ENCODE measurements at regions of chr22 and their contacts with region 1.

Region 1: GRCh38 chr22:43230971-43231723 is 44.2 kb upstream of the TTLL12 start:
- DNase-seq: no peak

Region 2: GRCh38 chr22:43088979-43089717 is 142.0 kb before region 1 on chr22 and contains the start of gene TTLL1:
- intact Hi-C with region 1: no loop called
- DNase-seq: peak; percentile 97
- total RNA-seq, gene TTLL1: 5.0 to 7.2 TPM

Region 3: DNA sequence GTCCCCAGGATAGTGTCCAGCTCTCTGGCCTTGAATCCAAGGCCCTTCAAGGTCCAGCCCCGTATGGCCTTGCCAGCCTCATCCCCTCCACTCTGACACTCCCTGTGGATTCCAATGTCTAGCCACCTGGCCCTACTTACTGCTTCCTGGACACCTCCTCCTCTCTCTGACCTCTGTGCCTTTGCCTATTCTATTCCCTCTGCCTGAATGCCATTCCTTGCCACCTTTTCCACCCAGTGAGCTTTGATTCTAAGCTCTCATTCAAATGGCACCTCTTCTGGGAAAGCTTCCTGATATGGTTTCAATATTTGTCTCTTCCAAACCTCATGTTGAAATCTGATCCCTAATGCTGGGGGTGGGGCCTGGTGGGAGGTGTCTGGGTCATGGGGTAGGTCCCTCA is 12.4 kb before region 1 on chr22:
- intact Hi-C with region 1: loop called in 1 of 2 experiments (anchors 1 kb)
- DNase-seq: no peak

Region 4: DNA sequence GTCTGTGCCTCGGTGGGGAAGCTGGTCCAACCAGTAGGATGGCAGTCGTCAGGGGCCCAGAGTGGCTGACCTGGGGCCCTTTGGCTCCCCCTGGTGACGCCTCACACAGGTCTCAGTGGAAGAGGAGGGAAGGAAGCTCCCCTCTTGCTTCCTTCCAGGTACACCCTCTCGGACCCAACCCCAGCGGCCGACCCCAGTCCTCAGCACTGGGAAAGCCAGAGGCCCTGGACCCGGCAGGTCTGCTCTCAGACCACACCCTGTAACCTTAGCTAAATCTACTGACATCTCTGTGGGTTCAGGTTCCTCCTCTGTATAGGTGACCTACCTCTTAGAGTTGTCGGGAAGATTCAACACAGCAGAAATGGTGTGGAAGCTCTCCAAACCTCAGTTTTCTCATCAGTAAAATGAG is 115.4 kb after region 1 on chr22:
- intact Hi-C with region 1: loop called in 1 of 2 experiments (anchors 10 kb)
- DNase-seq: peak; percentile 84

Region 5: GRCh38 chr22:44608597-44609399 is 1377.7 kb after region 1 on chr22:
- intact Hi-C with region 1: no loop called
- DNase-seq: no peak